Heart right ventricle (tissue), 16 donors: ENCODE measurements at regions of chrX and their contacts with region 1.

Region 1: GRCh38 chrX:30570505-30570904 is 7.1 kb downstream of the TASL start:
- DNase-seq: no peak
- ATAC-seq: no peak
- H3K4me3 ChIP-seq: no peak overlapping the region
- H3K27ac ChIP-seq: no peak overlapping the region
- H3K4me1 ChIP-seq: peaks cover 0 to 11% (median 0%) of the 10 kb centered on the region in 9 donors
- H3K27me3 ChIP-seq: peaks cover 0 to 3% (median 0%) of the 10 kb centered on the region in 7 donors
- CTCF ChIP-seq: peak; percentile 28 to 70 (median 60)

Region 2: GRCh38 chrX:30388325-30388724 is 182.2 kb before region 1 on chrX:
- intact Hi-C with region 1: no loop called
- DNase-seq: no peak
- ATAC-seq: no peak
- H3K4me3 ChIP-seq: no peak overlapping the region
- H3K27ac ChIP-seq: no peak overlapping the region
- H3K4me1 ChIP-seq: no peaks in the 10 kb centered on the region
- H3K27me3 ChIP-seq: no peaks in the 10 kb centered on the region
- CTCF ChIP-seq: no peak

Region 3: DNA sequence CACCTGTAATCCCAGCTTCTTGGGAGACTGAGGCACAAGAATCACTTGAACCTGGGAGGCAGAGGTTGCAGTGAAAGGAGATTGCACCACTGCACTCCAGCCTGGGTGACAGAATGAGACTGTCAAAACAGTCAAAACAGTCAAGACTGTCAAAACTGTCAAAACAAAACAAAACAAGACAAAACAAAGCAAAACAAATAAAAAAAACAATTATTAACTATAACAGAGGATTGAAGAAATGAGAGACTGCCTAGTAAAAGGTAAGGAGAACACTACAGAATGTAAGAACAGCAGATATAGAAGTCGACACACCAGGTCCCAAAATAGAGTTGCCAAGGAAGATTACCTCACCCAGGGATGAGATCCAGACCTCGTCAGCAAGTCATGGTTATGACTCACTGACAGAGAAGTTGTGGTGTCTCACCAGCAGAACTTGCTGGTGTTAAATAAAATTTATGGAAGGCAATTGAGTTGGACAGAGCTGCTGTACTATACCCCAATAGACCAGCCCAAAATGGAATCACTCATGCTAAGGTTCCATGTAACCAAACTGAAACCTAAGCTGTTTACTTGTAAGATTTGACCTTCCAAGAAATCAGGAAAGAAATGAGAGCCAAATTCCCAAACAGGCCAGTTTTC is 50.6 kb after region 1 on chrX:
- intact Hi-C with region 1: loop called in 1 of 10 experiments (anchors 10 kb)
- DNase-seq: peak in 1 of 2 donors; percentile 29
- ATAC-seq: peak; percentile 79 to 94 (median 90)
- H3K4me3 ChIP-seq: no peak overlapping the region
- H3K27ac ChIP-seq: peak overlapping the region in 5 of 10 donors; percentile 15 to 60 (median 57)
- H3K4me1 ChIP-seq: peaks cover 0 to 18% (median 0%) of the 10 kb centered on the region in 9 donors
- H3K27me3 ChIP-seq: no peaks in the 10 kb centered on the region
- CTCF ChIP-seq: no peak

Region 4: GRCh38 chrX:30635630-30636029 is 65.1 kb after region 1 on chrX:
- intact Hi-C with region 1: no loop called
- DNase-seq: no peak
- ATAC-seq: no peak
- H3K4me3 ChIP-seq: no peak overlapping the region
- H3K27ac ChIP-seq: no peak overlapping the region
- H3K4me1 ChIP-seq: peaks cover 0 to 8% (median 0%) of the 10 kb centered on the region in 9 donors
- H3K27me3 ChIP-seq: no peaks in the 10 kb centered on the region
- CTCF ChIP-seq: peak in 8 of 9 donors; percentile 16 to 44 (median 34)

Region 5: DNA sequence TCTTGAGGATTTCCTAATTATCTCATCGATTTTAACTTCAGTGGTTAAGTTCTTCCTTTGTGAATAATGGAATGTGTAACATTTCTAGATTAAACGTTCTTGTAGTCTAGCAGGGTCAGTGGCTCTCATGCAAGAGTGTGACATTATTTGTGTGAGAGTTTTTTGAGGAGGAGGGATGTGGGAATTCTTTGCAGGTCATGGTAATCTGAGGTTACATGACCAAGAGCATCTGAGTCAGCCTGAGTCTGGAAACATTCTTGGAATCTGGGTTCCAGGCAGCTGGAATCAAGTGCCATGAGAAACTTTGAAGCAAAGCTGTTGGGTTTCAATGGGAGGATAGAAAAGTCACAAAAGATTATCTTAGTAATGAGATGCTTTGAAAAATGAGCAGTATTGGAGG is 132.2 kb after region 1 on chrX:
- intact Hi-C with region 1: loop called in 1 of 10 experiments (anchors 10 kb)
- DNase-seq: no peak
- ATAC-seq: no peak
- H3K4me3 ChIP-seq: no peak overlapping the region
- H3K27ac ChIP-seq: no peak overlapping the region
- H3K4me1 ChIP-seq: no peaks in the 10 kb centered on the region
- H3K27me3 ChIP-seq: peaks cover 0 to 10% (median 0%) of the 10 kb centered on the region in 7 donors
- CTCF ChIP-seq: no peak

Region 6: GRCh38 chrX:30713061-30713525 is 142.6 kb after region 1 on chrX:
- intact Hi-C with region 1: loop called in 7 of 10 experiments (anchors 2 to 10 kb)
- DNase-seq: peak in 1 of 2 donors; percentile 6
- ATAC-seq: peak in 2 of 8 donors; percentile 58 to 64
- H3K4me3 ChIP-seq: no peak overlapping the region
- H3K27ac ChIP-seq: no peak overlapping the region
- H3K4me1 ChIP-seq: no peaks in the 10 kb centered on the region
- H3K27me3 ChIP-seq: peaks cover 0 to 35% (median 0%) of the 10 kb centered on the region in 7 donors
- CTCF ChIP-seq: peak in 7 of 9 donors; percentile 41 to 63 (median 57)